PC-9 (cell line): ENCODE measurements at regions of chrX and their contacts with region 1.

Region 1: DNA sequence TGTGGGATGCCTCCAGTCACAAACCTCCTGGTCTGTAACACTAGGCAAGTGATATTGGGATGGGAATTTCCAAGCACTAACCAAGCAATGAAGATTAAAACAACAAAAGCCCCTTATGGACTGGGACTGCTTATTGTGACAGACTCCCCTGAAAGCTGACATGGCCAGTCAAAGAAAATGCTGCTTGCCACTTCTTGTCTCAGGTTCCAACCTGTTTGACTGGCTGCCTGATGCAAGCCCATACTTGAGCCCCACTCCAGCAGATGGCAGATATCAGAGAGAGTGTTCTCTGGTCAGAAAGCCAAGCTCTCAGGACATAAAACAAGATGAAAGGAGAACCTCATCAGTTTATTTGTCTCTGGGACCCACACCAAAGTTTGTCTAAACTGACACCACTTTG is 15.5 kb upstream of the IGBP1 start:
- DNase-seq: no peak
- H3K4me3 ChIP-seq: no peak overlapping the region
- H3K27ac ChIP-seq: no peak overlapping the region
- H3K4me1 ChIP-seq: no peaks in the 10 kb centered on the region
- H3K27me3 ChIP-seq: peaks cover 19% of the 10 kb centered on the region
- CTCF ChIP-seq: no peak

Region 2: GRCh38 chrX:70022616-70023015 is 95.1 kb before region 1 on chrX:
- CTCF ChIA-PET with region 1: interaction called, 12 read pairs
- POLR2A ChIA-PET with region 1: no interaction called
- intact Hi-C with region 1: no loop called
- DNase-seq: no peak
- H3K4me3 ChIP-seq: no peak overlapping the region
- H3K27ac ChIP-seq: no peak overlapping the region
- H3K4me1 ChIP-seq: no peaks in the 10 kb centered on the region
- H3K27me3 ChIP-seq: no peaks in the 10 kb centered on the region; the same call in 1 of the 2 replicates
- CTCF ChIP-seq: no peak